ENCODE measurements at regions of chr9 and their contacts with region 1.

Region 1: DNA sequence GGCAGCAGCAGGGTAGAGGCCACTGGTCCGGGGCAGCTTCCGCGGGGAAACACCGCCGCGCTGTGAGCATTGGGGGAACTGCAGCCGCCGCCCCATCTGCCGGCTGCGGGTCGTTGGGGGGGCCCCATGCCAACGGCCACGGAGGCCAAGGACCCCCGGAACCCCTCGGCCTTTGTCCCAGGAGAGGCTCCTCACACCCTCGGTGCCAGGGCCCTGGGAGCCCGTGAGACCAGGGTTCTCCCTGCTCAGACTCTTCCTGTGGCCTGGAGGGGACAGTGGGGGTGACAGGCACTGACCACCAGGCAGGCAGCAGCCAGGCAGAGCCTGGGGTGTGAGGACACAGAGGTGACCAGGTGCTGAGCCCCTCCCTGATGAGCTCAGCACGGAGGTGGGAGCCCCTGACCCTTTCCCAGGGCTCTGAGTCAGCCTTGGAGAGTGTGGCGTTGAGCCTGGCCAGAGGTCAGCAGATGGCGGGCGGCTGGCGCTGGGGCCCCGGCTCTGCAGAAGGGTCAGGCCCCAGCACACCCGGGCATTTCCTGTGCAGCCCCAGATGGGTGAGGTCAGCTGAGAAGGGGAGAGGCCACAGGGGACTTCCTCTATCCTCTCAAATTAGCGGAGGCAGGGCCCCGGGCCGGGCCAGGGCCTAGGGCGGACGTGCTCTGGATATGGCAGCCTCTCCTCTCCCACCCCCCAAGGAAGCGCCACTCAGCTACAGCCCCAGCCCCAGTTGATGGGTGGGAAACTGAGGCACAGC is 17.9 kb upstream of the EGFL7 start:
- DNase-seq: peak in 8 of 9 experiments; percentile 47 to 81 (median 70)
- ATAC-seq: peak; percentile 99
- H3K4me3 ChIP-seq: no peak overlapping the region
- H3K4me3 Mint-ChIP-seq: no peak overlapping the region
- H3K27ac ChIP-seq: no peak overlapping the region
- H3K27ac Mint-ChIP-seq: no peak overlapping the region
- H3K4me1 ChIP-seq: peaks cover 10% of the 10 kb centered on the region
- H3K4me1 Mint-ChIP-seq: no peaks in the 10 kb centered on the region
- H3K27me3 ChIP-seq: peaks cover 12 to 30% of the 10 kb centered on the region in 2 experiments
- H3K27me3 Mint-ChIP-seq: peaks cover 28% of the 10 kb centered on the region
- CTCF ChIP-seq: peak; percentile 82

Region 2: GRCh38 chr9:136587145-136587943 is 57.4 kb before region 1 on chr9:
- CTCF ChIA-PET with region 1: no interaction called
- POLR2A ChIA-PET with region 1: no interaction called
- intact Hi-C with region 1: loop called in 1 of 2 experiments (anchors 2 kb)
- DNase-seq: no peak
- ATAC-seq: no peak
- H3K4me3 ChIP-seq: no peak overlapping the region
- H3K4me3 Mint-ChIP-seq: no peak overlapping the region
- H3K27ac ChIP-seq: no peak overlapping the region
- H3K27ac Mint-ChIP-seq: no peak overlapping the region
- H3K4me1 ChIP-seq: peaks cover 25% of the 10 kb centered on the region
- H3K4me1 Mint-ChIP-seq: peaks cover 19% of the 10 kb centered on the region
- H3K27me3 ChIP-seq: no peaks in the 10 kb centered on the region
- H3K27me3 Mint-ChIP-seq: no peaks in the 10 kb centered on the region
- CTCF ChIP-seq: no peak